ENCODE measurements at regions of chr22 and their contacts with region 1.

Region 1: DNA sequence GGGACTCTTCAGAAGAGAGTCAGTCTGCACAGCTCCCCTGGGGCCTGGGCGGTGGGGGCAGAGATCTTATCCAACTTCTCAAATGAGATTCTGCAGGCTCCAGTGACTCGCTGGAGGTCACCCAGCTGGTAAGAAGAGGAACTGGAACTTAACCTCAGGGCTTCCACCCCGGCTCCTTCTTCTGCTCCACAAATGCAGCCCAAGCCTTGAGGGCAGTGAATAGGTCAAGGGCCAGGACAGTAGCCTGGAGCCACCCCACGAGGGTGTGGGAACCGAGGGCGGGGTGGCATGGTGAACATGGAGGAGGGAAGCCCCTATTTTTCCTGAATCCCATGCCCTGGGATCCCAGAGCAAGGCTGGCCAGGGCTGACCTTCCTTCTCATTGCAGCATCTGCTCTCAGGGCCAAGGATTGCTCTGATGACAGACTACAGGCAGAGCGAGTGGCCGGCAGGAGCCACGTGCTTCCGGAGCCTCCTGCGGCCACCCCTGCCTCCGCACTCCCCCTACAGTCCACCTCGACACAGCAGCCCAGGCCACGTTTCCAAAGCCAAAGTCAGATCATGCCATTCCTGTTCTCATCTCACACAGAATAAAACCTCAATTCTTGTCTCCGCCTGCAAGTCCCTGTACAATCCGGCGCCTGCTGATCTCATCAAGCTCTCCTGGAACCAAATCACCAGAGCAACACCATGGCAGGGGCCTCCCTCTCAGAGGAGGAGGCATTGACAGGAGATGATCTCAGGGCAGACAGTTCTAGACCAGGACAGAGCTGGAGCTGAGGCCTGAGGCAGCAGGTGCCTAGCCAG is 21.1 kb upstream of the UPK3A start:
- DNase-seq: peak; percentile 71 to 75
- ATAC-seq: peak; percentile 84 to 94 (median 92)
- H3K4me3 ChIP-seq: no peak overlapping the region
- H3K27ac ChIP-seq: peak overlapping the region in 7 of 10 donors; percentile 0 to 66 (median 37)
- H3K4me1 ChIP-seq: peaks cover under 1 to 26% (median 12%) of the 10 kb centered on the region in 9 donors
- H3K27me3 ChIP-seq: peaks cover 0 to 12% (median 0%) of the 10 kb centered on the region in 7 donors
- CTCF ChIP-seq: peak; percentile 42 to 77 (median 73)

Region 2: GRCh38 chr22:45101515-45102227 is 162.0 kb before region 1 on chr22:
- intact Hi-C with region 1: loop called in 2 of 10 experiments (anchors 5 kb)
- DNase-seq: peak in 1 of 2 donors; percentile 41
- ATAC-seq: peak in 7 of 8 donors; percentile 22 to 79 (median 68)
- H3K4me3 ChIP-seq: no peak overlapping the region
- H3K27ac ChIP-seq: no peak overlapping the region
- H3K4me1 ChIP-seq: peaks cover 0 to 3% (median 0%) of the 10 kb centered on the region in 9 donors
- H3K27me3 ChIP-seq: peaks cover 0 to 81% (median 66%) of the 10 kb centered on the region in 7 donors
- CTCF ChIP-seq: peak in 7 of 9 donors; percentile 15 to 55 (median 35)